ENCODE measurements at regions of chr1 and their contacts with region 1.

Region 1: DNA sequence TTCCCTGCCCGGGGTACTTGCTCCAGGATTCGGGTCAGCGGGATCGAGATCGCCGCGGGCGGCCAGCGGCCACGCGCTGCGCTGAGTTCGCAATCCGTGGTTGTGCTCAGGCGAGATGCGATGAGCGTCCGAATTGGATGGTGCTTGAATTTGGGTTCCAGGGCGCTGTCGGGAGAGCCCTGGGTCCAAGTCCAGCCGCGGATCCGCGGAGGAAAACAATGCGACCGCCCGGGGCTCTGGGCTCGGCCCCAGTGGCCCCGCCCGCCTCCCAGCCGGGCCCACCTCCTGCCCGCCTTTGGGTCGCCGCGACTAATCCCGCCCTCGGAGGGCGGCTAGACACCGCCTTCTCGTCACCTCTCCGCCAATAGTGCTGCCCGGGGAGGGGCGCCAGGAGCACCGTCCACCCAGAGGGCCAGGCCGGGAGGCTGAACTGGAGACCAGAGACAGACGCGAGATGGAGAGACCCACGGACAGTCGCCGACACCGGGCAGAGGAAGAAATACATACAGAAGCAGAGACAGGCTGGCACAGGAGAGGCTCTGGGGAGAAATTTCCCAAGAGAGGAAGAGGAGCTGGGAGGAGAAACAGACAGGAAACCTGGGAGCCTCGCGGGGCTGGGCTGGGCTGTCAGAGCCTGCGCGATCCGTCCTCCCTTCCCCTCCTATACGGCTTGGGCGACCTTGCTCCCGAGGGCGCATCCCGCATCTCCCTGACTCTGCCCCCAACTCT is at the start of gene SEMA6C:
- DNase-seq: peak; percentile 100
- total RNA-seq, gene SEMA6C: 46.5 TPM

Region 2: DNA sequence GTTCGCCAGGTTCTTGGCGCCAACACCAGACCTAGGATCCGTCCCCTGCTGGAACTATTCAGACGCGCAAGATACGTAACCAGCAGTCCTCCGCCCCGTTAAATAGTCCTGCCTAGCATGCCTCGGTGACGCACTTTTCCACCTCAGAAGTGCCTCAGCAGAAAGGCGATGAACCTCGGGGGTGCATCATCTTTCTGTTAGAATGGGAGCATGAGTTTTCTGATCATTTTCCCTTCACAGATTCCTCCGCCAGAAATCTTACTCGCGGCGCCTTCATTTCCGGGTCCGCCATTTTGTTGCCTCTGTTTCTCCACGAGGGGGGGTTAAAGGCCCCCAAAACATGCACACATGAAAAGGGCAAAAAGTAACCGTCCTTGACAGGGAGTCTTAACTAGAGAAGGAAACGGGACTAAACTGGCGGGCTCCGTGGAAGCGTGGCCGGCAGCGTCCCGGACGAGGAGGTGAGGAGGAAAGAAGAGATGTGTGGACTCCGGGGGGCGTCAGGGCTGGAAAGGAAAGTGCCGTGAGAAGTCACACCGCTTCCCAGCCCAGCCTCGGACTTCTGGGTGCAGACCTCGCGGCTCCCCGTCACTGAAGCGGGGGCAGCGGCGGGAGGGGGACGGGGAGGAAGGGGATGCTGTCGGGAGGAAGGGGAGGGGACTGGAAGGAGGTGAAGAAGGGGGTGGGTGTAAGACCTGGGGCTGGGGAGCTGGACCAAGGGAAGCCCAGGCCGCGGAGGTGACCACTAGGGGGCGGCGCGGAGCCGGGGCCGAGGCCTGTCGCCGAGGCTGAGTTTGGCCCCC is 75.9 kb before region 1 on chr1 and contains the start of gene GABPB2:
- intact Hi-C with region 1: loop called (anchors 5 kb)
- DNase-seq: peak; percentile 96
- total RNA-seq, gene GABPB2: 11.7 TPM

Region 3: GRCh38 chr1:151198255-151199127 is 51.9 kb after region 1 on chr1 and contains the start of gene PIP5K1A:
- intact Hi-C with region 1: no loop called
- DNase-seq: peak; percentile 99
- total RNA-seq, gene PIP5K1A: 40.6 TPM